Calu3 (cell line): ENCODE measurements at regions of chr17 and their contacts with region 1.

Region 1: DNA sequence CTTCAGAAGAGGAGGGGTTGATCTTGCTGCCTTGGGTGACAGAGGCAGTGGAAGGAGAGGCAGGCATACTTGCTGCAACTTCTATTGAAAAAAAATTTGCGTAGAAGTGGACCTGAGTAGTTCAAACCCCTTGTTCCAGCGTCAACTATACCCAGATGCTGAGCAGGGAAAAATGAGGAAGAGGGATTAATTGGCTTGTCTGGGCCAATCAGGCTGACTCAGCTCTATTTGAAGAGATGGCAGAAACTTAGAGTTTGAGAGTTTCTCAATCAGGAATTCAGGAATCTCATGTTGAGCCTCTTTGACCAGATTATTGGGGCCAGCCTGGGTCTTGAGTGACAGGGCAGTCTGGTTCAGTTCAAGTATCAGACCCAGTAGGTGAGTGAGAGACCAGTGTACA is 17.6 kb downstream of the CASC3 start:
- DNase-seq: no peak
- H3K4me3 Mint-ChIP-seq: no peak overlapping the region
- H3K27ac Mint-ChIP-seq: no peak overlapping the region
- H3K4me1 Mint-ChIP-seq: no peaks in the 10 kb centered on the region
- H3K27me3 Mint-ChIP-seq: no peaks in the 10 kb centered on the region
- CTCF ChIP-seq: no peak

Region 2: DNA sequence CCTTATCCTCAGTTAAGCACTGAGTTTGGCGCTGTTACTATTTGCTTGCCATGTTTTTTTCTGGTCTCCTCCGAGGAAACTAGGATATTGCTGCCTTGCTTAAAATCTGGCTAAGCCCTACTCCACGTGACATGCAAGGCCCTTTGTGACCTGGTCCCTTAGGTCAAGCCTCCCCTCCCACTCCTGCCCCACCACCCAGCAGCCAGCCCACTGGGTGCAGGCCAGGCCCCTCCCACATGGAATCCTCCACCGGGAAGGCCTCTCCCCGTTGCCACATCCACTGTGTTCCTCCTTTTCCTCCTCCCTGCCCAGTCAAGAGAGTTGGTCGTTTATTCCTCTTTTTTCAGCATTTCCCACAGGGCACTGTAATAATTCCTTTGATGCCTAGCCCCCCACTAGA is 161.2 kb before region 1 on chr17:
- CTCF ChIA-PET with region 1: interaction called, 11 read pairs
- intact Hi-C with region 1: no loop called
- DNase-seq: no peak
- H3K4me3 Mint-ChIP-seq: no peak overlapping the region
- H3K27ac Mint-ChIP-seq: no peak overlapping the region
- H3K4me1 Mint-ChIP-seq: no peaks in the 10 kb centered on the region
- H3K27me3 Mint-ChIP-seq: no peaks in the 10 kb centered on the region
- CTCF ChIP-seq: no peak

Region 3: DNA sequence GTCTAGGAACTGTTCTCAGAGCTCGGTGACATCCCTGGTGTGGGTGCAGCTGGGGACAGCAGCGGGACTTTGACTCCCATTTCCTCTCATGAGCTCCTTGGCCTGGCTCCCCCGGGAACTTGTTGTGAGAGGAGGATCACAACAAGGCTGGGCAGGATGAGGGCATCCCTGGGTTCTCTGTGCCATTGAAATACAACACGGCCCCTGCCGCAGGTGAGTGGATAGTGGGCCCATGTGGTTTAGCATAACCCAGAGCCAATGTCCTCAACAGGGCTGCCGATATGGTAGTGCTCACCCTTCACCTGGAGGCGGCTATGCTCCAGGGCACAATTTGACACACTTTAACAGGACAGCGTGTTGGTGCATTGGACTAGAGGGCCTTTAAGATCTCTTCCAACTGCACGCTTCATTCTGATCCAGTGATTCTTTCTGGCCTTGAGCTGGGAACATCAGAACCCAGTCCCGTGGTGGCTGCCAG is 456.9 kb after region 1 on chr17:
- CTCF ChIA-PET with region 1: no interaction called
- intact Hi-C with region 1: no loop called
- DNase-seq: no peak
- H3K4me3 Mint-ChIP-seq: no peak overlapping the region
- H3K27ac Mint-ChIP-seq: no peak overlapping the region
- H3K4me1 Mint-ChIP-seq: peaks cover 20% of the 10 kb centered on the region
- H3K27me3 Mint-ChIP-seq: peaks cover 97% of the 10 kb centered on the region
- CTCF ChIP-seq: no peak